Esophagus muscularis mucosa (tissue), 4 donors: ENCODE measurements at regions of chr14 and their contacts with region 1.

Region 1: DNA sequence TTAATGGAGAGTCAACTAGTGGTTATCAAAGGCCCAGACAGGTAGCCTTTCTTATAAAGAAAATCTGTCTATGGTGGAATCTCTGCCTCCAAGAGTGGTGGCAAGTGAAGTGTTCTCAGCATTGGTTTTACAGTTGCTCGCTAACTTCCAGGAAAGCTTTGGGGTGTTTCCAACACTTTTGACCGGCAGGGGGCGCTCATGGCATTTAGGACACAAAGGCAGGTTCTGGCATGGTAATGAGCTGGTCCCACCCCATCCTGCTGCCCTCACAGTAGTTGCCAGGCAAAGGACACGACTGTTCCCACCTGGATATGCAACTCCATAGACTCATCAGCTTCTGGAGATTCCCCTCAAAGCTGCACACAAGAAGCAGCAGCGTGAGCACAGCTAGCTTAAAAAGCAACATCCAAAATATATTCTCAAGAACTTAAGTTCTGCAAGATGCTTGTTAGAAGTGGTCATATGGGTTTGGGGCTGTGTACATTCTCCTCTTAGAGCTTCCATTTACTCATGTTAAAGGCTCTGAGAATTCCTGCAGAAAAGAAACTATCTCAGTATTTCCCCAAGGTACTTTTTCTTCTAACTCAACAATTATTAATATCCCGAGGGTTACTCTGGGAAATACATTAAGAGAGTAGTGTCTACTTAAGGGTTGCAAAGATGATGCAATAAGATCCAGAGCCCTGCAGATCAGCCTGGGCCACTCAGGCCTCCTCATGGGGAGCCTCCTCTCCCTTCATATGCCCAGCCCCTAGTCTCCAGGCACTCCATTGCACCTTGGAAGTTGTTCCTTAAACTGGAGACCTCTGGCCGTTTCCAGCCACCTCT is 14.8 kb downstream of the PROX2 start:
- DNase-seq: peak; percentile 98
- H3K4me3 ChIP-seq: no peak overlapping the region
- H3K27ac ChIP-seq: no peak overlapping the region
- H3K4me1 ChIP-seq: peaks cover 0 to 10% (median 10%) of the 10 kb centered on the region in 4 donors
- H3K27me3 ChIP-seq: no peaks in the 10 kb centered on the region
- CTCF ChIP-seq: peak; percentile 82 to 90 (median 86)
- EP300 ChIP-seq: no peak
- POLR2A ChIP-seq: no peak

Region 2: DNA sequence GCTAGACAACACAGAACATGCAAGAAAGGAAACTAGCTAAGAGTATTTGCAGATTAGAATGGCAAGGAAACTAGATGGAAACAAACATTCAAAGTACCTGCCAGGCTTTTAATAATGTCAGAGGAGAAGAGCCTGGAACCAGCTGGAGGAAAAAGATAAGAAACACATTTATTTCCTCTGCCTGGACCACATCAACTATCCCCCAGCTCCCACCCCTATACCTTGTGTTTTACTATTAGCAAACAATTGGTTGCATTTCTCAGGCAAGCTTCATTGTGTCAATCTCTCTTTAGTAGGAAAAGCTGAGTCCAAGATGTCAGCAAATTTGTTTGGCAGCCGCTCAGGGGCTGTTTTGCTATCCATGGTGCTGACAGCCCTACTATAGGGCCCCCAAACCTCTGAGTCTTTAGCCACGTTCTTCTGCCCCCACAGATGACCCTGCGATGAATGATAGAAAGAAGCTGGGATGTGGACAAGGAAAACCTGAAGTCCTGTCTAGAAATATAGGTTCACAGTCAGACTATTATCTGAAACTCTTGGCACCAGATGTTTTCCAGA is 423.5 kb before region 1 on chr14:
- intact Hi-C with region 1: no loop called
- DNase-seq: no peak
- H3K4me3 ChIP-seq: no peak overlapping the region
- H3K27ac ChIP-seq: no peak overlapping the region
- H3K4me1 ChIP-seq: peaks cover 0 to 6% (median 0%) of the 10 kb centered on the region in 4 donors
- H3K27me3 ChIP-seq: no peaks in the 10 kb centered on the region
- CTCF ChIP-seq: no peak
- EP300 ChIP-seq: no peak
- POLR2A ChIP-seq: no peak

Region 3: DNA sequence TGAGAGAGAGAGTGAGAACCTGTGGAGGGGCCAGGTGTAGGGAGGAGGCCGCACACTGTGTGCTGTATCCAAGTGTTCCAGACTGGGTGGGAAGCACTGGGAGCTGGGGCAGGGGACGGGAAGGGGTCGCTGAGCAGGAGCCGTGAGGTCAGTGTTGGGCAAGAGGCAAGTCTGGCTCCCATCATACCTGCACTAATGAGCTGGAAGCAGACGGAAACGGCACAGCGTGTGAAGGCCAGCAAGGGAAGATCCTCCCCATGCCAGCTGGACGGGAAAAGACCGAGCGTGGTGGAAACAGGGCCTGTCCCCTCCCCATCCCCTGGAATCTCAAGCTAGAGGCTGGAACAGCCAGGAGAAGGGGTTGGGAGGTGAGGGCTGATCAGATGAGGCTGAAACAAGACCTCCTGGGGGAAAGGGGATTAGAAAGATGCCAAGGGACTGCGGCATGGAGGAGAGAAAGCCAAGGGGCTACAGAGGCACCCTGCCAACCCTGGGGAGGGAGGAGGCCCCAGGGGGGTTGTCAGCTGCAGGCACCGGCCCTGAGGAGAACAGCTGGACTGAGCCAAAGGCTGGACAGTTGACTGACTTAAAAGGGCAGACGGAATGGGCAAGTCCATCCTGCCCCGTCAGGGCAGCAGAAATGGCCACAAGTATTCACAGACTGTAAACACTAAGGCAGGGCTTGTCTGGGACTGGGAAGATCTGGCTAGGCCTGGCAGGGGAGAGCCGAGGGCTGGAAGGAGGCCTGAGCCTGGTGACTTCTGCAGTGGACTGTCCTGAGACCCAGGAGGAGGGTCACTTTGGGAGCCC is 230.0 kb before region 1 on chr14:
- intact Hi-C with region 1: no loop called
- DNase-seq: no peak
- H3K4me3 ChIP-seq: no peak overlapping the region
- H3K27ac ChIP-seq: no peak overlapping the region
- H3K4me1 ChIP-seq: peaks cover 0 to 2% (median 0%) of the 10 kb centered on the region in 4 donors
- H3K27me3 ChIP-seq: no peaks in the 10 kb centered on the region
- CTCF ChIP-seq: no peak
- EP300 ChIP-seq: no peak
- POLR2A ChIP-seq: no peak

Region 4: GRCh38 chr14:74792249-74793039 is 68.7 kb before region 1 on chr14:
- intact Hi-C with region 1: no loop called
- DNase-seq: no peak
- H3K4me3 ChIP-seq: no peak overlapping the region
- H3K27ac ChIP-seq: peak overlapping the region in 2 of 4 donors; percentile 27 to 32
- H3K4me1 ChIP-seq: peaks cover 18 to 26% (median 25%) of the 10 kb centered on the region in 4 donors
- H3K27me3 ChIP-seq: no peaks in the 10 kb centered on the region
- CTCF ChIP-seq: no peak
- EP300 ChIP-seq: no peak
- POLR2A ChIP-seq: no peak

Region 5: GRCh38 chr14:74905375-74906142 is 44.4 kb after region 1 on chr14:
- intact Hi-C with region 1: loop called (anchors 2 kb)
- DNase-seq: no peak
- H3K4me3 ChIP-seq: no peak overlapping the region
- H3K27ac ChIP-seq: peak overlapping the region in 2 of 4 donors; percentile 42 to 64
- H3K4me1 ChIP-seq: peaks cover 30 to 35% (median 32%) of the 10 kb centered on the region in 4 donors
- H3K27me3 ChIP-seq: no peaks in the 10 kb centered on the region
- CTCF ChIP-seq: peak; percentile 86 to 95 (median 90)
- EP300 ChIP-seq: no peak
- POLR2A ChIP-seq: no peak